Tibial artery (tissue), 4 donors: ENCODE measurements at regions of chr3 and their contacts with region 1.

Region 1: GRCh38 chr3:187319699-187320302 is 28.3 kb upstream of the MASP1 start:
- DNase-seq: peak; percentile 78 to 83
- H3K4me3 ChIP-seq: no peak overlapping the region
- H3K27ac ChIP-seq: no peak overlapping the region
- H3K4me1 ChIP-seq: peaks cover 0 to 11% (median 4%) of the 10 kb centered on the region in 4 donors
- H3K27me3 ChIP-seq: peaks cover 0 to 5% of the 10 kb centered on the region in 2 donors
- CTCF ChIP-seq: peak; percentile 75 to 84

Region 2: DNA sequence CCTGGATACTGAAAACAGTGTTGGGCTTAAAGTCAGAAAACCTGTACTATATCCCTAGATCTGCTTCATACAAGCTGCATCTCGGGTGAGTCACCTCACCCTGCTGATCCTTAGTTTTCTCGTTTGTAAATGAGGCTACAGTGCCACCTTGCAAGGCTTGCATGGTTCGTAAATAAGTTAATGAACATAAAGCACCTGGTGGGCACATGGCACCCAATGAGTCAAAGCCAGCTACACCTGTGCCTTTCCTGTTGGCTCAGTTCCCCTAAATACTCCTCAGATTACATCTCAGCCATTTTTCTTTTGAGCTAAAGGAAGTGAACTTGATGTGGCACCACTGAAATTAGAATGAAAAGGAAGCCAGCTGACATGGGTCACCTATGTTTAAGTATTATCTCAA is 96.0 kb before region 1 on chr3:
- intact Hi-C with region 1: loop called (anchors 5 kb)
- DNase-seq: no peak
- H3K4me3 ChIP-seq: no peak overlapping the region
- H3K27ac ChIP-seq: no peak overlapping the region
- H3K4me1 ChIP-seq: peaks cover 0 to 22% (median 6%) of the 10 kb centered on the region in 4 donors
- H3K27me3 ChIP-seq: no peaks in the 10 kb centered on the region
- CTCF ChIP-seq: no peak

Region 3: DNA sequence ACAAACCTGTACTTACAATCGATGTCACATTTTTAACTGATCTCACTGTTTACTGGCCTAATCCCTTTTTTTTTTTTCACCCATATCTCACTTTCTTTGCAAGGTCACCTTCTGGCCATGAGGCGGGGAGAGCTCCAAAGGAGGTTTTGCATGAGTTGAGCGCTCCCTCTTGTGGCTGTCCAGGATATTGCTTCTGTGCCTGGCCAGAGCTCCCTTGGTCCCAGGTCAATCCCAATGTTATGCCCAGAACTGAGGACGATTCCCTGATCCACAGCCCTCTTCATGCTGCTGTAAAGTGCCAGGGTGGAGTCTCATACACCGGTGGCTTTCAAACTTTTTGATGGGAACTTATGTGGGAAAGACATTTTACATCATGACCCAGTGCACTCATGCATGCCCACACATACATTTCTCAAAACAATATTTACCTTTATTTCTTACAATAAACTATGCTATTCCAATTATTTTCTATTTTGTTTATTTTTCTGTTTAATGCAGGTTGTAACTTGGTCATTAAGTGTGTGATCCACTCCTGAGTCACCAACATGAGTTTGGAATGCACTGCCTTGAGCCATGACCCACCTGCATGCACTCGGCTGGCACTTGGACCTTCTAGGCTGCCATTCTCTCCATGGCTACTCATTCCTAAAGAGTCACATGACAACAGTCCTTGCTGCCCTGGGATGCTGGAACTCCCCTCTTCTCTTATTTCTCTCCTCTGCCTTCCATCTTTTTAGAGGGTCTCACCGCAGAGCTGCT is 360.0 kb after region 1 on chr3:
- intact Hi-C with region 1: loop called (anchors 2 kb)
- DNase-seq: peak; percentile 75 to 82
- H3K4me3 ChIP-seq: no peak overlapping the region
- H3K27ac ChIP-seq: no peak overlapping the region
- H3K4me1 ChIP-seq: peaks cover 0 to 3% (median 0%) of the 10 kb centered on the region in 4 donors
- H3K27me3 ChIP-seq: peaks cover 0 to 12% of the 10 kb centered on the region in 2 donors
- CTCF ChIP-seq: peak; percentile 92 to 93

Region 4: DNA sequence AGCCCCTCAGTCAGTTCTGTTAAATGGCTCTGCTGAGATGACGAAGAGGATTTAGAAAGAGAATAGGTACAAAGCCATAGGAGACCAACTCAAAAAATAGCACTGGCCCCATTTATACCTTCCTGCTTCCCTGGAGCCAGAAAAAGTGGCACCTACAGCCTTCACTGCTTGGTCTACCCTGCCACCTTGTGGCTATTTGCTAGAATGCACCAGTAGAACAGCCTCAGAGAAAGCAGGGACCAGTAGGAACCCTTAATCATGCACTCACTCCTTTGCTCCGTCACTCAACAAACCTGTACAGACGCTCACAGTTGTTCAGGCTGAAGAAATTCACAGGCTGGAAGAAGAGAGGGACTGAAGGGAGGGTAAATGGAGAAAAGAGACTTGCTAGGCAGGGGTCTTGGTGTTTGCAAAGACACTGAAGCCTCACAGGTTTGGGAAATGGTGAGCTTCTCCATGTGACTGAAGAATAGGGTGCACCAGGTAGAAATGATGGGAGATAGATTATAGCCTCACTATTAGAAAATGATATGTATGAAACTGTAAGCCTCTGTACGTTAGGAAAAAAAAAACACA is 394.7 kb after region 1 on chr3:
- intact Hi-C with region 1: loop called (anchors 10 kb)
- DNase-seq: peak; percentile 71 to 80
- H3K4me3 ChIP-seq: no peak overlapping the region
- H3K27ac ChIP-seq: no peak overlapping the region
- H3K4me1 ChIP-seq: peaks cover 0 to 5% (median 0%) of the 10 kb centered on the region in 4 donors
- H3K27me3 ChIP-seq: no peaks in the 10 kb centered on the region
- CTCF ChIP-seq: peak; percentile 86 to 94